Mucosa of descending colon (tissue), 3 donors: ENCODE measurements at regions of chr9 and their contacts with region 1.

Region 1: GRCh38 chr9:34899535-34900158 is 58.4 kb upstream of the PHF24 start:
- DNase-seq: peak; percentile 46 to 90 (median 81)
- ATAC-seq: peak; percentile 95
- H3K4me3 ChIP-seq: no peak overlapping the region
- H3K4me1 ChIP-seq: no peaks in the 10 kb centered on the region
- CTCF ChIP-seq: peak; percentile 55

Region 2: DNA sequence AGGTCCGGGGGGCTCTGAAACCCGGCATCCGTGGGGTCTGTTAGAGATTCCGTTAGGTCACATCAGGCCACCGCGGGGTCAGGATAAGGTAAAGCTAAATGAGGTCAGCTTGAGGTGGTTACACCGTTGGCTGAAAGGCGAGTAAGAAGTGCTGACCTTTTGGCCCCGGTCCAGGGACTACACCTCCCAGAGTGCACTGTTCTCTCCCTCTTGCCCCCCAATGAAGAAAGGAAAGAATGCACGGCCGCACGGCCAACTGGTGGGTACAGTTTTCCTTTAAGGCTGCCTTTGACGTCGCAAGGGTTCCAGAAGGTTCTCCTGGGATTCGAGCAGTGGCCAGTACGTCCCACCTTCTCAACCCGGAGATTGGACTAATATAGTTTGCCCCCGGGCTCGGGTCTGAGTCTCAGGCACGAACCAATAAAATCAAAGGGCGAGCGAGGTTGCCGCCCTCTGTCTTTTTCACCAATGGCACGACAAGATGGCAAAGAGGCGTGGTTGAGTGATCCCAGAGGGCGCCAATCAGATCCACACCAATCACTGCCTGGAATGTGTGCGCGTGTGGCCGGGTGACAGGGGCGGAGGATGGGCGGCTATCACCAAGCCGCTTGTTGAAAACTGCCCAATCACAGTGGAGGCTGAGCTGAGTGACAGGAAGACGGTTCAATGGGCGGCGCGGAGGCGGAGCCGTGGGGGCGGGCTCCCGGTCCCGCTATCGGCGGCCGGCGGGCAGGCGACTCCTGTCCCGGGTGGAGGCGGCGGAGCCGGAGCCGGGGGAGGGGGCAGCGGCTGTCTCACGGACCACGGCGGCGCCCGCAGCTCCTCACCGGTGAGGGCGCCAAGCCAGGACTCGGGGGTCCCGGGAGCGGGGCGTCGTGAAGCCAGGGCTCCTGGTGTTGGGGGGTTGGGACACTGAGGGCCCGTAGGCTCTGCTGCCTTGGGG is 89.6 kb after region 1 on chr9 and contains the start of gene DNAJB5:
- intact Hi-C with region 1: loop called in 1 of 2 experiments (anchors 5 kb)
- DNase-seq: peak; percentile 98
- ATAC-seq: peak; percentile 96
- H3K4me3 ChIP-seq: peak within 1 kb of the TSS; percentile 29
- H3K4me1 ChIP-seq: peaks cover 4% of the 10 kb centered on the region
- CTCF ChIP-seq: no peak
- total RNA-seq, gene DNAJB5: 1.2 to 32.9 (median 5.8) TPM

Region 3: GRCh38 chr9:35476596-35476995 is 576.9 kb after region 1 on chr9:
- intact Hi-C with region 1: loop called in 1 of 2 experiments (anchors 5 kb)
- DNase-seq: no peak
- ATAC-seq: no peak
- H3K4me3 ChIP-seq: no peak overlapping the region
- H3K4me1 ChIP-seq: no peaks in the 10 kb centered on the region
- CTCF ChIP-seq: no peak